Left cardiac atrium (tissue), 4 donors: ENCODE measurements at regions of chr1 and their contacts with region 1.

Region 1: DNA sequence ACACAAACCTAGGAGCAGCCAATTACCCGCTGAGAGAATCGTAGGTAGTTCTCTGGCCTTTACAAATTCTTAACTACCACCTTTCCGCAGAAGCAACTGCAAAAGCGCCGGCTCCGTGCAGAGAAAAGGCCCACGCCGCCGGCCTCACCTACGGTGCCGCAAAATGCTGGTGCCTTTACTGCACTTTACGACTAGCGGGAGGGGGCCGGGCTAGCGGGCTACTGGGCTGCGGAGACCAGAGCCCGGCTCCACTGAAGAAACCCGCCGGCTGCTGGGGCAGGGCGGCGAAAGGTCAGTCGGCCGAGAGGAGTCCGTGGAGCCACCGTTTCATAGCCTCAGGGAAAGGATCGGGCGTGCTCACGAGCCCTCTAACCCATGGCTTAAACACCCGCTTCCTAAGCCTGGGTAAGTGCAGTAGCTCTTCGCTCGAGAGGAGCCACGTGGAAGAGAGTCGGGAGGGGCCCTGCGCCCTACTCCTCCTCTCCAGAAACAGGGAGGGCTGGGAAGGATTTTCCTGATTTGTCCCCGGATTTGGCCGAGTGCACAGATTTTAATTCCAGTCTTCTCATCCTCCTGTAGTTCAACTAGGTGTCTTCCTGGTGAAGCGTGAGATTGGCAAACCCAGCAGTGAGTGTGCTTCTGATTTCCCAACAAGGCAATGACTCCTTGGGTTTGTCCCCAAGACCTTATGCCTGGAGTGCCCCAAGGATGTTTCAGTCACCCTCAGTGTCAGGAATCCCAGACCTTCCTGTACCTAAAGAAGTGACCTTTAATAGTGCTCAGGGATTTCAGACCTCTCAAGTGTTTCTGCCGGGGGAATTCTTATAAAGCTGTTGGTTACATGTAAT is at the start of gene DPH5:
- DNase-seq: peak; percentile 94
- ATAC-seq: peak; percentile 97 to 99
- total RNA-seq, gene DPH5: 28.6 to 28.7 TPM

Region 2: DNA sequence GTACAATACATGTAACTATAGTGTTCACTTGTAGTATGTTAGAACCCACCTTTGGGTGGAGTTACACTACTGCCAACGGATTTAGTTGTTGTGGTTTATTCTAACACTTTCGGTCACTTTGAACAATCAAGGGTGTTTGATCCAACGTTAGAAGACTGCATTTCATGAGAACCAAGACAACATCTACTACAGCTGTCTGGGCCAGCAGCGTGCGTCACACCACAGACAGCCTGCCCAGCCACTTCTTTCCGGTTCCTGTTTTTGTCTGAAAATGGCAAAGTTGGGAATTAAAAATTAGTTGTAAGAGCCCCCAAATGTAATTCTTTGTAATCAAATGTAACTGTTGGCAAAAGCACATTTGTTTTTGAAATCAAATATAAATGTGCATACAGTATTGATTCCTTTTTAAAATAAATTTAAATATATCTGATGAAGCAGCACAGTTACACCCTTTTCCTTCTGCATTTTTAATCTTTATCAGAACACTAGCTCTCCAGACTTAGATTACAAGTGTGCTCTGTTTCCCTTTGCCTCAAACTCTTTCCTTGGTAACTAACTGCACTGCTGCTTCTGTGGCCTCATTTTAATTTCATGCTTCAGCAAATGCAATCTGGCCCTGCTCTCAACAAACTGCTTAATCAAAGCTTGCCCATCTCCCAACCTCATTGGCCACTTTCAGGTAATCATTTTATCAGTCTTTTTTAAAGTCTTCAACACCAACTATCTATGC is 86.3 kb after region 1 on chr1:
- intact Hi-C with region 1: loop called in 1 of 2 experiments (anchors 10 kb)
- DNase-seq: peak; percentile 71
- ATAC-seq: peak; percentile 80 to 86